ENCODE measurements at regions of chr2 and their contacts with region 1.

Region 1: DNA sequence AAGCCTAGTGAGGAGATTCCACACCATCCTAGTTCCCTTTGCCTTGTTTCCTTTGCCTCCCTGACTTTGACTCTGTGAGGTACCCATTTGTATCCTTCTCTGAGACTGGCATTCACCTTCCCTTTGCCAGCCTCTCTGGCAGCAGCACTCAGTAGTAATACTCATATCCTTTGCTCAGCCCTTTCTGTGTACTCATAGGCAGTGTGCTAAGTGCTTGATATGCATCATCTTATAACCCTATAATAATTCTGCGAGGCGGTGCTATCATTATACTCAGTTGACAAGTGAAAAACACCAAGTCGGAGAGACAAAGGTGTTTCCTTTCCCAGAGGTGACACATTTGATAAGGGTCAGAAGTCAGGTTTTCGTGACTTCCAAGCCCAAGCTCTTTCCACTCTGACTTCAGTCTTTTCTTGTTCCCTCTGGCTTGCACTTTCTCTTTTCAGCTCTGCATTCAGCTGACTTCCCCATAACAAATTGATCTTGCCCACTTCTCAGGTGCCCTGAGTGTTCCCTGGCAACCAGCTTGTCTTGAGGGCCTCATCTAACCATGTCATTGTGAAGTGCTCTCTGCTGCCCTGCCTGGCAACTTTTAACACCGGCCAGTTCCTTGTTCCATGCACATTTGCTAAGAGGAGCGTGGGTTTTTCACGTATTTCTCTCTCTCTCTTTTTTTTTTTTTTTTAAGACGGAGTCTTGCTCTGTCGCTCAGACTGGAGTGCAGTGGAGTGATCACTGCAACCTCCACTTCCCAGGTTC is 94.5 kb upstream of the UPP2 start:
- DNase-seq: no peak
- ATAC-seq: no peak; the same call in 1 of the 2 replicates
- H3K4me3 ChIP-seq: no peak overlapping the region
- H3K27ac ChIP-seq: no peak overlapping the region
- H3K4me1 ChIP-seq: no peaks in the 10 kb centered on the region
- H3K27me3 ChIP-seq: 0 out of 2 replicates have a peak, but pooled peaks cover 5% of the 10 kb centered on the region
- CTCF ChIP-seq: peak; percentile 14; the same call in 1 of the 2 replicates

Region 2: DNA sequence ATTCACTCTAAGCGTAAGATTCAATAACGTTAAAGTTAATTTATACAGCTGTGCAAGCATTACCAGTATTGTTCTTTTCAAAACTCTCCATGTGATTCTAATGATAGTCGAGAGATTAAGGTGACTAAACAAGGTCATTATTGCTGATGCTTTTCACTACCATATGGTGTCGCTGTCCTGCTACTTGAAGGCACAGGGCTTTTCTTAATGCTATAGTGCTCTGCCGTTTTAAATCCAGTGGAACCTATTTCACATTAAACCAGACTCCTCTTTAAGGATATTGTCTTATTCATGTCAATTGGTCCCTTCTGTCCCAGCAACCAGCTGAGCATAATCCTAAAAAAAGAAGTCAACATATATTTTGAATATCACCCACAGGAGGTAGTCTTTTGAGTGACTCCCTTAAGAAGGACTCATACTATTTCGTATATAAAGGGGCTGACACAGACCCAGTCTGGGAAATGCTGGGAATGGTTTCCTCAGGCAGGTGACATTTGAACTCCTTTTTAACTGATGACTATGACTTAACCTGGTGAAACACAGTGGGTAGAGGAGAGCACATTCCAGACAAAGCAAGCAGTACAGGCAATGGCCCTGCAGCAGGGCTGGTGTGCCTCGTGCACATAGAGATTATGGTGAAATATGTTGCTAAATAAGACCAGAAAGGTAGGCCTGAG is 509.4 kb before region 1 on chr2:
- CTCF ChIA-PET with region 1: no interaction called
- POLR2A ChIA-PET with region 1: no interaction called
- in situ Hi-C with region 1: no loop called
- intact Hi-C with region 1: loop called (anchors 5 kb)
- DNase-seq: peak; percentile 24
- ATAC-seq: 0 out of 2 replicates have a peak, but pooled peaks have one; percentile 60
- H3K4me3 ChIP-seq: no peak overlapping the region
- H3K27ac ChIP-seq: no peak overlapping the region
- H3K4me1 ChIP-seq: no peaks in the 10 kb centered on the region
- H3K27me3 ChIP-seq: 0 out of 2 replicates have a peak, but pooled peaks cover 2% of the 10 kb centered on the region
- CTCF ChIP-seq: peak; percentile 68; the same call in 1 of the 2 replicates

Region 3: GRCh38 chr2:157777427-157777826 is 229.7 kb before region 1 on chr2:
- CTCF ChIA-PET with region 1: no interaction called
- POLR2A ChIA-PET with region 1: no interaction called
- in situ Hi-C with region 1: no loop called
- intact Hi-C with region 1: loop called (anchors 1 kb)
- DNase-seq: peak; percentile 28
- ATAC-seq: 0 out of 2 replicates have a peak, but pooled peaks have one; percentile 70
- H3K4me3 ChIP-seq: no peak overlapping the region
- H3K27ac ChIP-seq: no peak overlapping the region
- H3K4me1 ChIP-seq: no peaks in the 10 kb centered on the region
- H3K27me3 ChIP-seq: no peaks in the 10 kb centered on the region
- CTCF ChIP-seq: peak; percentile 74; the same call in 1 of the 2 replicates

Region 4: GRCh38 chr2:158191076-158191895 is 184.1 kb after region 1 on chr2:
- CTCF ChIA-PET with region 1: no interaction called
- POLR2A ChIA-PET with region 1: no interaction called
- in situ Hi-C with region 1: no loop called
- intact Hi-C with region 1: no loop called
- DNase-seq: no peak
- ATAC-seq: no peak
- H3K4me3 ChIP-seq: no peak overlapping the region
- H3K27ac ChIP-seq: no peak overlapping the region
- H3K4me1 ChIP-seq: no peaks in the 10 kb centered on the region
- H3K27me3 ChIP-seq: 0 out of 2 replicates have a peak, but pooled peaks cover 2% of the 10 kb centered on the region
- CTCF ChIP-seq: no peak